Astrocyte of the cerebellum (primary cell): ENCODE measurements at regions of chr16 and their contacts with region 1.

Region 1: GRCh38 chr16:15996432-15997109 is 47.2 kb downstream of the ABCC1 start:
- DNase-seq: peak; percentile 60
- H3K4me3 ChIP-seq: no peak overlapping the region
- CTCF ChIP-seq: no peak

Region 2: DNA sequence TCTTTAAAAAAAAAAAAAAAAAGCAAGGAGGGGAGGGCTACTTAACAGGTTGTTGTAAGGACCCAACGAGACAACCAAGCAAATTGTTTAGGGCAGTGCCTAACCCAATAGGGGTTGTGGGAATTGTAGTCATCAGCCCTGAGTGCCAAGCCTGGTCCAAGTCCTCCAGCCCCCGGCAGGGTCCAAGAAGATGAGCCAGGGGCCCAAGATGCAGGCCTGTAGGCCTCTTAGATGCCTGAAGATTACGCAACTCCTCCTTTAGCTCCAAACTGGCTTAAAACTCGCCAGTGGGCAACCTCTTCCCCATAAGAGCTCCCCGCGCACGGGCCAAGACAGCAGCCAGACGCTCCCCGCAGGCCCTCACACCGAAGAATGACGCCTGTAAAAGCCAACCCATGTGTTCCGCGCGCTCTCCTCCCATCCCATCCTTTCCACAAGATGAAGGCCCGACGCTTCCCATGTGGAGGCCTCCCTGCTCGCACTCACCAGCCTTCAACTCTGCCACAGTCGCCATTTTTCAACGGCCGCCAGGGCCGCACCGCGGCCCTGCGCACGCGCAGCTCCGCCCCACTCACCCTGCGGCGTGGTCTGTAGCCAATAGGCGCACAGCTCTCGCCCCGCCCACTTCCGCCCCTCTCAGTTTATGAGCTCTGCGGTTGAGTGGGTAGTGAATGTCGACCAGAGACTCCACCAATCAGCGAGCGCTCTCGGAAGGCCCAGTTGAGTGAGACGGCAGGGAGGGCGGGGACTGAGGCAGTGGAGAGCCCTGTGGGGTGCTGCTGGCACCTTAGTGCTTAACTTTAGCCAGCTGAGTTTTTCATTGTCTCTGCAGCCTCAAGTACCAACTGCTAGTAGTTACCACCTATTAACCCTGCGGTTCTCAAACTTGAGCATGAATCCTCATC is 108.2 kb before region 1 on chr16 and contains the start of gene CEP20:
- in situ Hi-C with region 1: loop called (anchors 25 kb)
- DNase-seq: peak; percentile 97
- H3K4me3 ChIP-seq: peak within 1 kb of the TSS; percentile 74
- CTCF ChIP-seq: peak; percentile 22